Activated T-helper 1 cell treated with anti-CD3 and anti-CD28 coated beads, Interleukin-12 subunit alpha, Interleukin-12 subunit beta, Interleukin-2, Interleukin-4 antibody, amounts not matched to agents 30 ng/mL and 10 ng/mL and 1 ng/mL, durations not matched to agents 14 hours and 24 hours and 36 hours (primary cell): ENCODE measurements at regions of chr13 and their contacts with region 1.

Region 1: DNA sequence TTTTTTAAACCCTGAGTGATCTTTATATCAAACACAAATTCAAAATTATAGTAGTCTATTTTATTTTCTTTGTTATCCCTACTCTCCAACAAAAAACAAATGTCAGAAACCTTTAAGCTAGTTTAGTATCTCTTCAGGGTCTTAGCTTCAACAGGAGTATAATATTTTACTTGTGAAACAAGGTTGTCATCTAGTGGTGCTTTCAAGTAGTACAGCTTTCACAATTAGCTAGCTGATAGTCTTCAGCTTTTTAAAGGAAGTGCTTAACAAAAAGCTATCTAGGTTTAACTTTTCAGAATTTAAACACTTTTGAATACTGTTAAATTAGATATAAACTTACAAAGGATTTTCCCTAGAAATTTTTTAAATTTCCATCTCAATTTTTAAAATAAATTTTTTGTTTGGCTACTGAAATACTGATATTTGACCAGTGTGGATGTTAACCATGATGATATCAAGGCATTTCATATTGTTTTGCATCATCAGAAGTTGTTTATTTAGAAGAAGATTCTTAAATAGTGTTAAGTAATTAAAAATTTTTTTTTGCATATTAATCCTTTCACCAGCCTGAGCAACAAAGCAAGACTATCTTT is 34.2 kb downstream of the TDRD3 start:
- DNase-seq: no peak
- H3K4me3 Mint-ChIP-seq: no peak overlapping the region
- H3K27ac Mint-ChIP-seq: no peak overlapping the region
- H3K4me1 Mint-ChIP-seq: peaks cover 17% of the 10 kb centered on the region
- H3K27me3 Mint-ChIP-seq: no peaks in the 10 kb centered on the region

Region 2: GRCh38 chr13:59677966-59678814 is 753.0 kb before region 1 on chr13:
- intact Hi-C with region 1: loop called (anchors 1 kb)
- DNase-seq: no peak
- H3K4me3 Mint-ChIP-seq: no peak overlapping the region
- H3K27ac Mint-ChIP-seq: no peak overlapping the region
- H3K4me1 Mint-ChIP-seq: no peaks in the 10 kb centered on the region
- H3K27me3 Mint-ChIP-seq: no peaks in the 10 kb centered on the region

Region 3: GRCh38 chr13:60163478-60164233 is 267.5 kb before region 1 on chr13 and contains the start of gene DIAPH3:
- intact Hi-C with region 1: loop called (anchors 10 kb)
- DNase-seq: peak; percentile 93
- H3K4me3 Mint-ChIP-seq: peak within 1 kb of the TSS; percentile 93
- H3K27ac Mint-ChIP-seq: peak within 1 kb of the TSS; percentile 94
- H3K4me1 Mint-ChIP-seq: peaks cover 38% of the 10 kb centered on the region
- H3K27me3 Mint-ChIP-seq: no peaks in the 10 kb centered on the region
- total RNA-seq, gene DIAPH3: 22.8 and 24.6 TPM in 2 replicates

Region 4: GRCh38 chr13:60335531-60335930 is 95.7 kb before region 1 on chr13:
- intact Hi-C with region 1: loop called (anchors 2 kb)
- DNase-seq: no peak
- H3K4me3 Mint-ChIP-seq: no peak overlapping the region
- H3K27ac Mint-ChIP-seq: no peak overlapping the region
- H3K4me1 Mint-ChIP-seq: no peaks in the 10 kb centered on the region
- H3K27me3 Mint-ChIP-seq: peaks cover 17% of the 10 kb centered on the region